ENCODE measurements at regions of chr1 and their contacts with region 1.

Region 1: GRCh38 chr1:9494929-9495758 is 44.1 kb upstream of the SLC25A33 start:
- DNase-seq: peak; percentile 74
- ATAC-seq: peak; percentile 89
- H3K4me3 Mint-ChIP-seq: peak overlapping the region; percentile 69
- H3K27ac Mint-ChIP-seq: peak overlapping the region; percentile 64
- H3K4me1 Mint-ChIP-seq: peaks cover 5% of the 10 kb centered on the region
- H3K27me3 Mint-ChIP-seq: peaks cover 10% of the 10 kb centered on the region
- CTCF ChIP-seq: peak; percentile 98

Region 2: DNA sequence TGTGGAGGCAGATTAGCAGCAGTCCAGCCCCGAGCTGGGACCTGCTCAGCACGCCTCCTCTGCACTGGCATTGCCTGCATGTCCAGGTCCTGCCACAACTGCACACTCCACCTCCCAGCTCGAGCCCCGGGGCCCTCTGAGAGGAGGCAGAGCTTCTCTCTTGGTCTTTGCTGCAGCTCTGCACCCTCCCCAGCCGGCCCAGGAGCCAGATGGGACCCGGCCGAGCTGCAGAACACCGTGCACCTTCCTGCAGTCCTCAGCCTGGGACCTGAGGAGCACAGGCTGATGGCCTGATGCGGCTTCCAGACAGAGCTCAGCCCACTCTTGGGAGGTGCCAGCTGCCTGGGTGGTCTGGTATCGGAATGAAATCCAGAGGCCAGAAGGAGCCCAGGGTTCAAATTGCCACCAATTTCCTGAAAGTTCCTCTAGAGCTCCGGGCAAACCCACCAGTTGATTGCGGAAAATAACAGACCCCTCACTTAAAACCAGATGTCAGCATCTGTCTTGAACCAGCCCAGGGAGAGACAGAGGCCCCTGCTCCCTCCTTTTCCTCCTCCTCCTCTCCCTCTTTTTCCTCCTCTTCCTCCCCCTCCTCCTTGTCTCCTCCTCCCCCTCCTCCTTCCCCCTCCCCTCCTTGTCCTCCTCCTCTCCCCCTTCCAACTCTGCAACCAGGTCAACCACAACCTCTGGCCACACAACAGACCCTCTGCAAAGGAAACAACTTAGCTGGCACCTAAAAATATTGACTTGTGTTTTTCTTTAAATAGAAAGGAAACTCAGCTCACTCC is 213.0 kb before region 1 on chr1:
- CTCF ChIA-PET with region 1: interaction called, 11 read pairs
- POLR2A ChIA-PET with region 1: no interaction called
- intact Hi-C with region 1: loop called (anchors 5 kb)
- DNase-seq: no peak
- ATAC-seq: no peak
- H3K4me3 Mint-ChIP-seq: no peak overlapping the region
- H3K27ac Mint-ChIP-seq: no peak overlapping the region
- H3K4me1 Mint-ChIP-seq: peaks cover 50% of the 10 kb centered on the region
- H3K27me3 Mint-ChIP-seq: no peaks in the 10 kb centered on the region
- CTCF ChIP-seq: no peak

Region 3: GRCh38 chr1:9435854-9436640 is 59.1 kb before region 1 on chr1:
- CTCF ChIA-PET with region 1: no interaction called
- POLR2A ChIA-PET with region 1: no interaction called
- intact Hi-C with region 1: no loop called
- DNase-seq: no peak
- ATAC-seq: no peak
- H3K4me3 Mint-ChIP-seq: no peak overlapping the region
- H3K27ac Mint-ChIP-seq: no peak overlapping the region
- H3K4me1 Mint-ChIP-seq: no peaks in the 10 kb centered on the region
- H3K27me3 Mint-ChIP-seq: peaks cover 5% of the 10 kb centered on the region
- CTCF ChIP-seq: no peak

Region 4: DNA sequence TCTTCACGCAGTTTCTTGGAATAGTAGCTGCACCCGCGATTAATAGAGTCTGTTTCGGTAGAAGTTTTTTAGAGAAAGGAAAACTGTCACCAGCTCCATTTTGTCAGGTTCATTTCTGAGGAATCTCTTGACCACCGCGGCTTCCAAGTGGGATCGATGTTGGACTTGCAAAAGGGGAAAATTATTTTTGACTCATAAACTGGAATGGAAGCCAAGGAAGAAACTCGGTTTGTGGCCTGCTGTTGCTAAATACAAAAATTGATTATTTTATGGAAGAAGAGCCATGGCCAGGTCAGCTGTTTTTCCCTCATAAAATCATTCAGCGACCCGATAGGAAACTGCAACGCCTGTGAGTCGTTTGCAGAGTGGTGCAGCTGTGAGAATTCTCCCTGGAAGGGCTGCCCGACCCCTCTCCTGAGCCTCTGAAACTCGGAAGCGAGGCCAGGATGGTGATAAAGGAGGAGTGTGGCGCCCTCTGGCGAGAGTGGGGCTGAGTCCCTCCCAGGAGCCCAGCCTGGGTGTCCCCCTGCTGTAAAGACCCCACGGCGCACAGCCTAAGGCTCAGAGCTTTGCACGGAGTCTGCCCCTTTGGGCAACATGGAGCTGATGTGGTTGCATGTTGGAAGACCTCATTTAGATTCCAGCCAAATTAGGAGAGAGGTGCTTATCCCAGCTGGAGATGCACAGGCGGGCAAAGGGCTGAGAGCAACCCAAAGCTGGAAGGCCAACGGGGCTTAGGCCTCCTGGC is 39.5 kb before region 1 on chr1:
- CTCF ChIA-PET with region 1: interaction called, 24 read pairs
- POLR2A ChIA-PET with region 1: no interaction called
- intact Hi-C with region 1: no loop called
- DNase-seq: peak; percentile 81
- ATAC-seq: peak; percentile 80
- H3K4me3 Mint-ChIP-seq: no peak overlapping the region
- H3K27ac Mint-ChIP-seq: no peak overlapping the region
- H3K4me1 Mint-ChIP-seq: no peaks in the 10 kb centered on the region
- H3K27me3 Mint-ChIP-seq: no peaks in the 10 kb centered on the region
- CTCF ChIP-seq: peak; percentile 90

Region 5: GRCh38 chr1:9481048-9481447 is 14.1 kb before region 1 on chr1:
- CTCF ChIA-PET with region 1: interaction called, 11 read pairs
- POLR2A ChIA-PET with region 1: no interaction called
- intact Hi-C with region 1: no loop called
- DNase-seq: no peak
- ATAC-seq: no peak
- H3K4me3 Mint-ChIP-seq: no peak overlapping the region
- H3K27ac Mint-ChIP-seq: no peak overlapping the region
- H3K4me1 Mint-ChIP-seq: no peaks in the 10 kb centered on the region
- H3K27me3 Mint-ChIP-seq: peaks cover 2% of the 10 kb centered on the region
- CTCF ChIP-seq: no peak